ENCODE measurements at regions of chr4 and their contacts with region 1.

Region 1: GRCh38 chr4:162163852-162164759 is at the start of gene FSTL5:
- DNase-seq: peak; percentile 82
- H3K4me3 ChIP-seq: peak within 1 kb of the TSS; percentile 29
- H3K27ac ChIP-seq: no peak within 1 kb of the TSS
- H3K4me1 ChIP-seq: no peaks in the 10 kb centered on the region
- H3K27me3 ChIP-seq: no peaks in the 10 kb centered on the region
- CTCF ChIP-seq: no peak
- total RNA-seq, gene FSTL5: 0.13 TPM in 1 of 2 donors, not detected in the other

Region 2: GRCh38 chr4:162442128-162442527 is 278.0 kb after region 1 on chr4:
- intact Hi-C with region 1: loop called (anchors 10 kb)
- DNase-seq: no peak
- H3K4me3 ChIP-seq: no peak overlapping the region
- H3K27ac ChIP-seq: no peak overlapping the region
- H3K4me1 ChIP-seq: no peaks in the 10 kb centered on the region
- H3K27me3 ChIP-seq: no peaks in the 10 kb centered on the region
- CTCF ChIP-seq: no peak